ENCODE measurements at regions of chr17 and their contacts with region 1.

Region 1: DNA sequence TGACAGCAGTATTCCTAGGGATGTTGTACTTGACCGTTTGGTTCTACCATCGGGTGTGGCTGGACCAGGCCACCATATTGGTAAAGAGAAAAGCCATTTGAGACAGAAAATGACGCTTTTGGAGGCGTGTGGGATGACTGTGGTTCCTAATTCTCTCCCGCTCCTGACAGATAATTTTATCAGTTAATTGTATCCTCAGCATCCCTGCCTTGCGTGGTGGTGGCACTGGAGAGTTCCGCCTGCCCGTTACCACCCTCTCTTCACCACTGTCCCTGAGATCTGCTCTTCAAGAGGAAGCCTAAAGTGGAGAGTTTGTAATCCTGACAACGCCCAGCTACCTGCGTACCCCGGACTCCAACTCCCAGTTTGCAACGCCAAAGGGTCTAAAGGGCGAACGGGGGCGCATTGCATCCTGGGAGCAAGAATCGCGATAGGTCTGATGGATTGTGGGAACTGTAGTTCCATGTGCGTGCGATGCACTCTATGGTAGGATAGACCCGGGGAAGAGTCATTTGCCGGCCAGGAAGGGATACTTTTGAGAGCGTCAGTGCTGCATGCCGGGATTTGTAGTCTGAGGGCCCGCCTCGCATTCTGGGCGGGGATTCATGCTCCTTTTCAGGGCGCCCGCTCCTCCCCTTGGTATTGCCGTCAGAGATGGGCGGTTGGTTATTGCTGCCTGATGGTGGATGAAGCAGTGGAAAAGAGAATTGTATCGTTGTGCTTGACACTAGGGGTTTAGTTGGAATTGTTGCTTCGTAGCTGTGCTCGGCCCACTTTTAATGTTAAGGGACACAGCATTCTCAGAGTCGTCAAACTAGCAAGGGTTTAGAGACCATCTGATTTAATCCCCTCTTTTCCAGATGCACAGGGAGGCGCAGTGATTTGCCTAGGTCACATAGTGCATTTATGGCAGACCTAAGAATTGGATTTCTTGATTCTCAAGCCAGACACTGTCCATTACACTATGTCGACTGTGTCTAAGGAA is 965 bp upstream of the PHF12 start:
- DNase-seq: peak; percentile 79 to 99 (median 96)
- ATAC-seq: peak; percentile 82
- H3K4me3 ChIP-seq: peak overlapping the region; percentile 84
- H3K4me3 Mint-ChIP-seq: no peak overlapping the region
- H3K27ac ChIP-seq: peak overlapping the region; percentile 81
- H3K27ac Mint-ChIP-seq: no peak overlapping the region
- H3K4me1 ChIP-seq: peaks cover 19 to 26% of the 10 kb centered on the region in 2 donors
- H3K4me1 Mint-ChIP-seq: peaks cover 12 to 24% (median 14%) of the 10 kb centered on the region in 7 donors
- H3K27me3 ChIP-seq: no peaks in the 10 kb centered on the region
- H3K27me3 Mint-ChIP-seq: peaks cover 0 to 4% (median 0%) of the 10 kb centered on the region in 5 donors

Region 2: DNA sequence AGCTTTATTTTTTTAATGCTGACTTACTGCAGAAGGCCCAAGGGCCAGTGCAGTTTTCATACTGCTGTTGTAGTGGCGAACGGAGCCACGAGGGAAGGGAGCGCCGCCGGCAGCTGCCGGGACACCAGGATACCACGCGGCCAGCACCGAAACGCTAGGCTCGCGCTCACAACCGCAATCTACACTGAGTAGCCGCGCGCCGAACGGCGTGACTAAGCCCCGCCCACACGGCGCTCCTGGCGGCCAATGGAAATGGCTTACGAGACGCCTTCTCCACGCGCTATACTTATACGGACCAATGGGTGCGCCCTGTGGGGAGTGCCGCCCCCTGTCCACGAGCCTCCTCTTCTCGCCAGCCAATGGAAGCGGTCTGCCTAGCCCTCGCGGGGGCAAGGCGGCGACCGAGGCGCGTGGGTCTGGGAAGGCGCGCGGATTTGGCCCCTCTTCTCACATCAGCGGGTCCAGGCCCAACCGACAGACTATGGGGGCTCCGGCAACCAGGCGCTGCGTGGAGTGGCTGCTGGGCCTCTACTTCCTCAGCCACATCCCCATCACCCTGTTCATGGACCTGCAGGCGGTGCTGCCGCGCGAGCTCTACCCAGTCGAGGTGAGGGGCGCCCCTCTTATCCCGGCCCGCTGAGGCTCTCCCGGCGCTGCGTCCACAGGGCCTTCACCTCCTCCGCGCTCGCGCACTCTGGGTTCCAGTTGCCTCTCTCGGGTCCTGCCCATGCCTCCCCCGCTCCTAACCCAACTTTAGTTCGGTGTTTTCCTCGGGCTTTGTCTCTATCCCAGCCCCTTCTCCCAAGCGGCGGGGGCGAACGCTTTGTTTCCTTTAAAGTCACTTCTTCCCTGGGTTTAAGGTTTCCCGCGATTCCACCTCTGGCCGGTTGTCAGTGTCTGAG is 633.3 kb before region 1 on chr17 and contains the start of gene TMEM97:
- CTCF ChIA-PET with region 1: no interaction called
- POLR2A ChIA-PET with region 1: interaction called, 3 read pairs
- intact Hi-C with region 1: loop called in 1 of 2 experiments (anchors 2 kb)
- DNase-seq: peak; percentile 83 to 95 (median 93)
- ATAC-seq: peak; percentile 99
- H3K4me3 ChIP-seq: peak within 1 kb of the TSS; percentile 69
- H3K4me3 Mint-ChIP-seq: peak within 1 kb of the TSS; percentile 77 to 97 (median 91)
- H3K27ac ChIP-seq: peak within 1 kb of the TSS; percentile 64
- H3K27ac Mint-ChIP-seq: peak within 1 kb of the TSS; percentile 37 to 90 (median 80)
- H3K4me1 ChIP-seq: peaks cover 11 to 12% of the 10 kb centered on the region in 2 donors
- H3K4me1 Mint-ChIP-seq: peaks cover 9 to 40% (median 21%) of the 10 kb centered on the region in 7 donors
- H3K27me3 ChIP-seq: no peaks in the 10 kb centered on the region
- H3K27me3 Mint-ChIP-seq: no peaks in the 10 kb centered on the region
- total RNA-seq, gene TMEM97: 2.9 to 19.9 (median 4.8) TPM

Region 3: GRCh38 chr17:28661635-28662537 is 290.4 kb before region 1 on chr17 and contains the starts of genes SDF2 and SUPT6H:
- CTCF ChIA-PET with region 1: no interaction called
- POLR2A ChIA-PET with region 1: interaction called, 9 read pairs
- intact Hi-C with region 1: loop called (anchors 1 kb)
- DNase-seq: peak; percentile 91 to 97 (median 95)
- ATAC-seq: peak; percentile 91
- H3K4me3 ChIP-seq: peak within 1 kb of the TSS; percentile 72
- H3K4me3 Mint-ChIP-seq: peak within 1 kb of the TSS; percentile 86 to 100 (median 99)
- H3K27ac ChIP-seq: peak within 1 kb of the TSS; percentile 90
- H3K27ac Mint-ChIP-seq: peak within 1 kb of the TSS; percentile 98 to 100 (median 100)
- H3K4me1 ChIP-seq: peaks cover 24 to 35% of the 10 kb centered on the region in 2 donors
- H3K4me1 Mint-ChIP-seq: peaks cover 45 to 73% (median 67%) of the 10 kb centered on the region in 7 donors
- H3K27me3 ChIP-seq: no peaks in the 10 kb centered on the region
- H3K27me3 Mint-ChIP-seq: no peaks in the 10 kb centered on the region
- total RNA-seq, gene SDF2: 28.6 to 49.5 (median 43.8) TPM
- total RNA-seq, gene SUPT6H: 91.2 to 132 (median 98.5) TPM

Region 4: DNA sequence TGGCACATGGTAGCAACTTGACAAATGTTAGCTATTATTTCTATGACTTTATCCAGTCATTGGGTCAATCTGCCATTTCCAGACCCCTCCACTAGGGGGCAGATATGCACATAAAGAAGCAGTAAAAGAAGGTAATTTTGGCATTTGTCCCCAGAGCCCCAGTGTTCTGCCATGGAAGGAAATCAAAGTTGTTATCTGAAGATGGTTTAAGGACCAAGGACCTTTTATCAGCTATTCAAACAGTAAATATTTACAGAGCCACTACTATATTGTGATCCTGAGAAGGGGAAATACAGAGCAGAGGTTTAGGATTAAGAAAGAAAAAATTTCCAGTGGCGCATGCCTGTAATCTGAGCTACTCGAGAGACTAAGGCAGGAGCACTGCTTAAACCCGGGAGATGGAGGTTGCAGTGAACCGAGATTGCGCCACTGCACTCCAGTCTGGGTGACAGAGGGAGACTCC is 188.4 kb before region 1 on chr17:
- CTCF ChIA-PET with region 1: interaction called, 36 read pairs
- POLR2A ChIA-PET with region 1: interaction called, 8 read pairs
- intact Hi-C with region 1: loop called (anchors 1 to 2 kb)
- DNase-seq: peak in 8 of 9 donors; percentile 63 to 82 (median 76)
- ATAC-seq: peak; percentile 95
- H3K4me3 ChIP-seq: no peak overlapping the region
- H3K4me3 Mint-ChIP-seq: no peak overlapping the region
- H3K27ac ChIP-seq: no peak overlapping the region
- H3K27ac Mint-ChIP-seq: peak overlapping the region in 5 of 9 donors; percentile 6 to 93 (median 75)
- H3K4me1 ChIP-seq: no peaks in the 10 kb centered on the region
- H3K4me1 Mint-ChIP-seq: peaks cover 4 to 16% (median 6%) of the 10 kb centered on the region in 7 donors
- H3K27me3 ChIP-seq: no peaks in the 10 kb centered on the region
- H3K27me3 Mint-ChIP-seq: no peaks in the 10 kb centered on the region

Region 5: DNA sequence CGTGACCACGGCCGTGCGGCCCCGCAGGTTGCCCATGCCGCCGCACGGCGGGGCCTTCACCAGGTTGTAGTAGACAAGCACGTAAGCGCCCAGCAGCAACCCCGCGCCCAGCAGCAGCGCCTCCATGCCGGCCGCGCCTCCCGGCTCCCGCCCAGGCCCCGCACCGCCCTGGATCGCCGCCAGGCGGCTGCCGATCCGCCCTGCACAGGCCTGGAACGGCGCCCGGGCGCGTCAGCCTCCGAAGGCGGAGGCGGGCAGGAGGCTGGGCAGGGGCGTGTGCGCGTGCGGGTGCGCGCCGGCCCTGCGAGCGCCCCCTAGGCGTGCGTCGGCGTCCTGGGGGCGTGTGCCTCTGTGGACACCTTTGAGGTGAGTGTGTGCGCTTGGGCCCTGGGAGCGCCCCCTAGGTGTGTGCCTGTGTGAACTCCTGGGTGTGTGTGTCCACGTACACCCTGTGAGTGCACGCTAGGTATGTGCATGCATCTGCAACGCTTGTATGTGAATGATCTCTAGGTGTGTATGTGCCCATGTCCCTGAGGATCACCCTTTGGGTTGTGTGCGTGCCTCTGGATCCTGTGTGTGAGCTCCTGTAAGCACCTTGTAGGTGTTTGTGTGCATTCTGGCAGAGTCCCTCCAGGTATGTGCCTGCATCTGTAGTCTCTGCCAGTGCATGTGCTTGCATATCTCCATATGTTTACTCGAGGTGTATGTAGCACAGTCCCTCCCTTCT is 49.3 kb before region 1 on chr17 and contains the start of gene DHRS13:
- CTCF ChIA-PET with region 1: interaction called, 4 read pairs
- POLR2A ChIA-PET with region 1: interaction called, 183 read pairs
- intact Hi-C with region 1: loop called (anchors 1 kb)
- DNase-seq: peak; percentile 92 to 99 (median 96)
- ATAC-seq: peak; percentile 96
- H3K4me3 ChIP-seq: peak within 1 kb of the TSS; percentile 77
- H3K4me3 Mint-ChIP-seq: peak within 1 kb of the TSS; percentile 85 to 98 (median 94)
- H3K27ac ChIP-seq: peak within 1 kb of the TSS; percentile 87
- H3K27ac Mint-ChIP-seq: peak within 1 kb of the TSS; percentile 81 to 96 (median 90)
- H3K4me1 ChIP-seq: peaks cover 18 to 29% of the 10 kb centered on the region in 2 donors
- H3K4me1 Mint-ChIP-seq: peaks cover 13 to 53% (median 36%) of the 10 kb centered on the region in 7 donors
- H3K27me3 ChIP-seq: no peaks in the 10 kb centered on the region
- H3K27me3 Mint-ChIP-seq: no peaks in the 10 kb centered on the region
- total RNA-seq, gene DHRS13: 20.0 to 51.3 (median 30.4) TPM

Region 6: GRCh38 chr17:28972437-28972836 is 20.2 kb after region 1 on chr17:
- CTCF ChIA-PET with region 1: no interaction called
- POLR2A ChIA-PET with region 1: no interaction called
- intact Hi-C with region 1: no loop called
- DNase-seq: no peak
- ATAC-seq: no peak
- H3K4me3 ChIP-seq: no peak overlapping the region
- H3K4me3 Mint-ChIP-seq: no peak overlapping the region
- H3K27ac ChIP-seq: no peak overlapping the region
- H3K27ac Mint-ChIP-seq: no peak overlapping the region
- H3K4me1 ChIP-seq: no peaks in the 10 kb centered on the region
- H3K4me1 Mint-ChIP-seq: no peaks in the 10 kb centered on the region
- H3K27me3 ChIP-seq: no peaks in the 10 kb centered on the region
- H3K27me3 Mint-ChIP-seq: peaks cover 0 to 3% (median 0%) of the 10 kb centered on the region in 5 donors

Region 7: GRCh38 chr17:29140051-29140621 is 187.9 kb after region 1 on chr17:
- CTCF ChIA-PET with region 1: no interaction called
- POLR2A ChIA-PET with region 1: interaction called, 28 read pairs
- intact Hi-C with region 1: loop called (anchors 1 kb)
- DNase-seq: peak in 8 of 9 donors; percentile 48 to 81 (median 51)
- ATAC-seq: peak; percentile 73
- H3K4me3 ChIP-seq: peak overlapping the region; percentile 76
- H3K4me3 Mint-ChIP-seq: peak overlapping the region; percentile 83 to 98 (median 91)
- H3K27ac ChIP-seq: peak overlapping the region; percentile 79
- H3K27ac Mint-ChIP-seq: peak overlapping the region; percentile 88 to 98 (median 96)
- H3K4me1 ChIP-seq: peaks cover 35 to 43% of the 10 kb centered on the region in 2 donors
- H3K4me1 Mint-ChIP-seq: peaks cover 54 to 75% (median 66%) of the 10 kb centered on the region in 7 donors
- H3K27me3 ChIP-seq: no peaks in the 10 kb centered on the region
- H3K27me3 Mint-ChIP-seq: no peaks in the 10 kb centered on the region

Measured in naive thymus-derived CD4-positive, alpha-beta T cell (primary cell).